GM13977 (cell line): ENCODE measurements at regions of chr22 and their contacts with region 1.

Region 1: DNA sequence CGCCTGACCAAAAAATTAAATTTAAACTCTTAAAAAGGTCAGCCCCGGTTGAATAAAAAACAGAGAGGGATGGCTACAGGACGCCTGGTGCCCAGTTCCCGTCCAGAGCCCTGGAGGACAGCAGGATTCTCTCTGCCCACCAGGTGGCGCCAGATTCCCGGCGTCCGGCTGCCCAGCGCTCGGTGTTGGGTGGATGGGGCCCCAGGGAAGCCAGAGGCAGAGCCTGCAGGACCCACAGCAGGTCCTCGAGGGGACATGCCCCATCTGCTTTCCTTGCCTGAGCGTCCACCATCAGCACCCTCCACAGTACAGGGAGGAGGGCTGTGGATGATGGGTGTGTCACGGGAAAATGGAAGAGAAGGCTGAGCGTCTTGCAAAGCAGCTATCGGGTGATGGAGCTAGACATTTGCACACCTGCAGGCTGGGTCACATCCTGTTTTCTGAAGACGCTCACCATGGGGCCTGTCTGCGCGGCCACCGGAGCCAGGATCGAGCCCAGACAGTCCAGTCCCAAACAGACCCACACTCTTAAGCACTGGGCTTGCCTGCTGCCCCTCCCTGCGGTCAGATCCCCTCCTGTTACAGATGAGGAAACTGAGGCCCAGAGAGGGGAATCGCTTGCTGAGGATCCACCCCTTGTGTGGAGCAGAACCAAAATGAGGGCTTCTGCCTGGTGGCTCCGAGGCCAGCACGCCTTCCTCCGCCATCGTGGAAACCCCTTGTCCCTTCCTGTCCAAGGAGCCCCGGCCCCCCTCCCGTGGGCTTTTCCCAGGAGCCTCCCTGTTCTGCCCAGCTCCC is 18.5 kb upstream of the CBX7 start:
- DNase-seq: peak; percentile 86
- CTCF ChIP-seq: peak; percentile 96

Region 2: DNA sequence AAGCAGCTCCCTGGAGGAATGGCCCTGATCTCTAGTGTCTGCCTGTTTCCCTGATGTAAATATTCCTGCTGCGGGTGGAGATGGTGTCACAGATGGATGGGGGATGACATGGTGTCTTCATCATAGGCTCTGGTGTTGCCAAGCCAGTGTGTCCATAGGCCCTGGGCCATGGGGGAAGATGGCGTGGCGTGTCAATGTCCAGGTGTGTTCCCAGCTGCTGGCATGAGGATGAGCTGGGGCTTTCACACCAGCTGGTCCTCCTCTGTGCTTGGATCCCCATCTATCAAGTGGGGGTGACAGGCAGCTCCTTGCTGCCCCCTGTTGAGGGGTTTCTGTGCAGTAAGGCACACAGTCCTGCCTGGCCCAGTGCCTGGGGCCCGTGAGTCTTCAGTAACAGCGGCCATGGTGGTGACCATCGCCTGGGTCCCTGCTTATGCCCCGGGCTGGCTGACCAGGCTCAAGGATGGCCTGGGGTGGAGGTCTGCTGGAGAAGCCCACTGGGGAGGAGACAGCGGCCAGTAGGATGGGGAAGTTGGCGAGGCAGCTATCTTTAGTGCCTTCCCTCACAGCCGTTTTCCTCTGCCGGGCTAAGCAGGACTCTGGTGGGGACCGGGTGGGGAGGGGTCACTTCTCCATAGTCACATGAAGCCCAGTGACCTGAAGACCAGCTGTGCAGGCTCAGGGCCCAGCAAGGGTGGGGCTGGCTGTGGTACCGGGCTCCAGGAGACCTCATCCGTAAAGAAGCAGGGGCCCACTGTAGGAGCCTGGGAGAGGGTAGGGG is 135.7 kb after region 1 on chr22:
- in situ Hi-C with region 1: loop called (anchors 5 kb)
- DNase-seq: peak; percentile 66
- CTCF ChIP-seq: peak; percentile 62

Region 3: DNA sequence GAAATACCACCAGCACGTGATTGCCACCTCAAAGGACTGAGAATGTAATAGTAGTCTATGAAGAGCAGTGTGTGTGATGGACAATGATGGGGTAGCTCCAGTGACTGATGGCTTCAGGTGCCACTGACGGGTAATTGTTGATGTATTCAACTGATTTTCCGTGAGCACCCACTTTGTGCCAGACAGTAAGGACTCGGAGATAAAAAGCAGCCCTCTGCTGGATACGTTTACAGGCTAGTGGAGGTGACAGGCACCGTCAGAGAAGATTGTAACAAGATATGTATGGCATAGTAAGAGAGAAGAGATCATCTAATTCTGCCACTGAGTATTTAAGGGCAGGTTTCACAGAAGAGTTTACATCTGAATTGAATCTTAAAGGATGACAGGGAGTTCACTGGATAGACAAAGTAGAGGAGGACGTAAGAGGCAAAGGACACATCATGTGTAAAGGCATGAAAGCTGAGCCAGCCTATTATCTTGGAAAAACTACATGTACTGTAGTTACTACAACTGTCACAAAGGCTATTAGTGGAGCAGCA is 723.6 kb after region 1 on chr22:
- in situ Hi-C with region 1: no loop called
- DNase-seq: no peak
- CTCF ChIP-seq: no peak